ENCODE measurements at regions of chr4 and their contacts with region 1.

Region 1: DNA sequence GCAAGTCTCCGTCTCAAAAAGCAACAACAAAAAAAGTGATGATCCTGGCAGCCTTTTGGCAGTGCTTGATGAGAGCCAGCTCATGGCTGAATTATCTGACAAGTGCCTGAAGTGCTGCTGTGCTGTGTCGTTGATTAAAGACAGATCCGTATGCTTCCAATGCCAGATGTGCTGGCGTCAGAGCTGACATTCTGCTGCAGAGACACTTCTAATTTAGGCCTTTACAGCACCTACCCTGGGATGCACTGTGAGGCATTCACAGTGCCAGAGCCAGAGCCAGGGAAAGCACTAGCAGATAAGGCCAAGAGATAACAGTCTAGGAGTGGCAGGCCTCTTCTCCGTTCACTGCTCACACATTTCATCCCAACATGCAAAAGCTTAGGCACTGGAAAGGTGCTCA is 995.5 kb downstream of the RAB28 start:
- DNase-seq: peak; percentile 72

Region 2: DNA sequence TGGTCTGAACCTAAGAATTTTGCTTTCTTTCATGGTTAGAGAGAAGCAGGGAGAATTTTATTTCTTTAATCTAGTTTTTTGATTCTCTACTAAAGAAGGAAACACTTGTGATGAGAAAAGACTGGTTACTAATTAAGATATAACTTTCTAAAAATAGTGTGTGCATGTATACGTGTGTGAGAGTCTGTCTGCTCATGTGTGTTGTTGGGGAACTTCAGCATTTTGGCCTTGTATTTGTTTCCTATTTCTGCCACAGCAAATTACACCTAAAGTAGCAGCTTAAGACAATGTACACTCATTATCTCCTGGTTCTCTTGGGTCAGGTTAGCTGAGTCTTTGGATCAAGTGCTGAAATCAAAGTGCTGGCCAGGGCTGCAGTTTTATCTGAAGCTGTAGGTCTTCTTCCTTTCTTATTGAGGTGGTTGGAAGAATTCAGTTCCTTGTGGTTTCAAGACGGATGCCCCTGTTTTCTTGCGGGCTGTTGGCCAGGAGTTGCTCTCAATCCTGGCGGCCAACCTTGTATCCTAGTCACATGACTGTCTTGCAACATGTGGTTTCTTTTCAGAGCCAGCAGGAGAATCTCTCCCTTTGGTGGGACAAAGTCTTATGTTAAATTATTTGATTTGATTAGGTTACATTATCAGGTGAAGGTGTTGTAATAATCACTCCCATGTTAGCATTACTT is 1615.7 kb before region 1 on chr4:
- intact Hi-C with region 1: loop called in 1 of 2 experiments (anchors 5 kb)
- DNase-seq: no peak

Region 3: DNA sequence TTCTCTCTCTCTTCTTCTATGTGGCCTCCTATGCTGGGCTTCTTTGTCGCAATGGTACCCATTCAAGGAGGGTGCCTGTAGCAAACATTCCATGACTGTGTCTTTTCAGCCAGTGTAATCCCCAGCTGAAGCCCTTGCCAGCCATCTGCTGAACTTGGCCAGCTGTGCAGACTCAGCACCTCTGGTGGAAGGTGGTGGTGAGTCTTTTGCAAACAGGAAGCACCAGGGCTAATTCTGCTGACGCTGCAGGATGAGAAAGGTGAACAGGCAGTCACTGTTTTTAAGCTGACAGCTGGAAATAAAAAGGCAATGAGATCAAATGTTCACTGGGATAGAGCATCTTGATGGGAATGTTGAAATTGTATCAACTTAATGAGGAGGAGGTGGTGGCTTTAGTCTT is 1505.4 kb before region 1 on chr4:
- intact Hi-C with region 1: no loop called
- DNase-seq: no peak

Region 4: GRCh38 chr4:12827966-12828365 is 339.3 kb after region 1 on chr4:
- intact Hi-C with region 1: no loop called
- DNase-seq: no peak

Measured in posterior vena cava (tissue), 2 donors.